ENCODE measurements at regions of chr3 and their contacts with region 1.

Region 1: DNA sequence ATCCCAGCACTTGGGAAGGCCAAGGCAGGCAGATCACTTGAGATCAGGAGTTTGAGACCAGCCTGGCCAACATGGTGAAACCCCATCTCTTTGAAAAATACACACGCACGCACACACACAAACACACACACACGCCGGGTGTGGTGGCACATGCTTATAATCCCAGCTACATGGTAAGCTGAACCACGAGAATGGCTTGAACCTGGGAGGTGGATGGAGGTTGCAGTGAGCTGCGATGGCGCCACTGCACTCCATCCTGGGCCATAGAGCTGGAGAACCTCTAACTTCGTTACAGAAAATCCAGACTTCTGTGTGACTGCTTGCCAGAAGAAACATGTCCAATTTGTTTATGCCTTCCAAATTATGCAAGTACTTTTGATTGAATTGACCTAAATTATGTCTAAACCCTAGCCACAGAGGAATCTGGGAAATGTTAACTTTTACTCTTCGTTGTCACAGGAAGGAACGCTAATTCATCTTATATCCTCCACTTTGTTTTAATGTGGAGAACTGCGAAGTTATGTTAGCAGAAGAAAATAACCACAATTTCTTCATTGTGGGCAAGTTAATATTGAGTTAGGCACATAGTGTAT is 21.7 kb downstream of the TRIM59 start:
- DNase-seq: no peak
- ATAC-seq: peak; percentile 13; the same call in 2 of the 3 replicates
- H3K4me3 ChIP-seq: no peak overlapping the region
- H3K27ac ChIP-seq: no peak overlapping the region
- H3K4me1 ChIP-seq: no peaks in the 10 kb centered on the region
- H3K27me3 ChIP-seq: no peaks in the 10 kb centered on the region
- CTCF ChIP-seq: no peak
- EP300 ChIP-seq: no peak
- POLR2A ChIP-seq: no peak
- RAD21 ChIP-seq: no peak

Region 2: DNA sequence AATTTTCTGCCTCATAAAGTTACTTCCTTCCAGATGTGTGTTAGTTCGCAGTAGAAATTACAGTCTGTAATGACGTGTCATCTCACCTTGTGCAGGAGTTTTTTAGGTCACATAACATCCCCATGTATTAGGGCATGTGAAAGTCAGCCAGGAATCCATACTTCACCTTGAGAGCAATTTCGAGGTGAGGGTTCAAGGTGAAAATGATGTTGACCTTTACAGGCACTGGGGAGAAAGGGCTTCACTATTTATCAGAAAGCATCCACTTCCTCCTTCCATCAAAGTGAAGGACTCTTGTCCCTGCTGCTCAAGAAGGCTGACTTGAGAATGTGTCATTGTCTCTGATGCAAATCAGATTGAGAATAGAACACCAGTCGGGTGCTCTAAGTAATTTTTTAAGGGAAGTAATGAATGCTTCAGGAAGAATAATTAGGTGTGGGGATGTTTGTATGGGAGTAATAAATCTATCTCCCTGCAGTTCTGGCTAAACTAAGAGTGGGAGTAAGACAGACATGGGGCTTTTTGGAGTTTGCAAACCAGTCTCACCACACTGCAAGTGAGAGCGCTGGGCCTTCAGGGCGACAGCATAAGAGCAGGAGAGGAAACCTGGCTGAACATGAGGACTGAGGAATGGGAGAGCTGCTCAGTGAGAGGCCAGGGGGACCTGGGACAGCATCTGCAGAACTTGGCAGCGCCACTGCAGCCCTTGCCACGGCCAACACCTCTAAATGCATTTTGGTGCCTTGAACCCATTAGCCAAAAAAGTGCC is 525.2 kb before region 1 on chr3:
- CTCF ChIA-PET with region 1: no interaction called
- POLR2A ChIA-PET with region 1: no interaction called
- RAD21 ChIA-PET with region 1: no interaction called
- SMC1A ChIA-PET with region 1: no interaction called
- in situ Hi-C with region 1: no loop called
- intact Hi-C with region 1: no loop called
- DNase-seq: no peak
- ATAC-seq: peak; percentile 78
- H3K4me3 ChIP-seq: no peak overlapping the region
- H3K27ac ChIP-seq: peak overlapping the region; percentile 52
- H3K4me1 ChIP-seq: peaks cover 28% of the 10 kb centered on the region
- H3K27me3 ChIP-seq: no peaks in the 10 kb centered on the region
- CTCF ChIP-seq: no peak
- EP300 ChIP-seq: no peak
- POLR2A ChIP-seq: no peak
- RAD21 ChIP-seq: no peak

Region 3: GRCh38 chr3:160084998-160085397 is 342.9 kb before region 1 on chr3:
- CTCF ChIA-PET with region 1: no interaction called
- POLR2A ChIA-PET with region 1: no interaction called
- RAD21 ChIA-PET with region 1: no interaction called
- SMC1A ChIA-PET with region 1: no interaction called
- in situ Hi-C with region 1: no loop called
- intact Hi-C with region 1: no loop called
- DNase-seq: no peak
- ATAC-seq: no peak
- H3K4me3 ChIP-seq: no peak overlapping the region
- H3K27ac ChIP-seq: no peak overlapping the region
- H3K4me1 ChIP-seq: no peaks in the 10 kb centered on the region
- H3K27me3 ChIP-seq: no peaks in the 10 kb centered on the region
- CTCF ChIP-seq: no peak
- EP300 ChIP-seq: no peak
- POLR2A ChIP-seq: no peak
- RAD21 ChIP-seq: no peak

Region 4: DNA sequence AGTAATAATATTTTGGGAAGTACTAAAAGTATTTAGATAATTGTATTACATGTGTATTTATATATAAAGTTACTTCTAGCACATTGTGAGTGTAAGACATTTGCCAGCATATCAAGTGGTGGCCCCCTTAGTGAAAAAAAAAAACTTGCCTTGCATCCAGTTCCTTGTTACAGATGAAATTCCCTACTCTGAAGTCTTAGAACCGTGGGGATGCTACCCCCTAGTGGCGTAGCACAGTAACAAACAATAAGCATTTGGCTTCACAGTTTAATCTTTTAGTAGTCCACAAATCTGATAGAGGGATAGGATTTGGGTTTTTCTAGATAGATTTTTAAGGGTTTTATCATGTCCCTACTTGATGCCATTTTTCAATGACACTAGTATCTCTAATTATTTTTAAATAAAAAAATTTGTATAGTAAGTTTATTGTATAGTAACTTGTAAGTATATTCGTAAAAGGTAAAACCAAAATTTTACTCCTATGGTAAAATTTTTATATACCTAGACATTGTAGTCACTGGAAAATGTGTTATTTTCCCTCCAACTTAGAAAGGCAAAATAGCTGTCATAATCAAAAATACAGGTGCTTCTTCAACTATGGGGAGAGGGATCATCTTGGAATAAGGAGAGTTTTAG is 14.2 kb before region 1 on chr3:
- CTCF ChIA-PET with region 1: interaction called, 13 read pairs
- POLR2A ChIA-PET with region 1: interaction called, 4 read pairs
- RAD21 ChIA-PET with region 1: interaction called, 6 read pairs
- SMC1A ChIA-PET with region 1: interaction called, 6 read pairs
- in situ Hi-C with region 1: no loop called
- intact Hi-C with region 1: no loop called
- DNase-seq: peak; percentile 19
- ATAC-seq: peak; percentile 72
- H3K4me3 ChIP-seq: no peak overlapping the region
- H3K27ac ChIP-seq: no peak overlapping the region
- H3K4me1 ChIP-seq: no peaks in the 10 kb centered on the region
- H3K27me3 ChIP-seq: no peaks in the 10 kb centered on the region
- CTCF ChIP-seq: peak; percentile 77 to 83 (median 82)
- EP300 ChIP-seq: no peak
- POLR2A ChIP-seq: no peak
- RAD21 ChIP-seq: peak; percentile 93

Region 5: DNA sequence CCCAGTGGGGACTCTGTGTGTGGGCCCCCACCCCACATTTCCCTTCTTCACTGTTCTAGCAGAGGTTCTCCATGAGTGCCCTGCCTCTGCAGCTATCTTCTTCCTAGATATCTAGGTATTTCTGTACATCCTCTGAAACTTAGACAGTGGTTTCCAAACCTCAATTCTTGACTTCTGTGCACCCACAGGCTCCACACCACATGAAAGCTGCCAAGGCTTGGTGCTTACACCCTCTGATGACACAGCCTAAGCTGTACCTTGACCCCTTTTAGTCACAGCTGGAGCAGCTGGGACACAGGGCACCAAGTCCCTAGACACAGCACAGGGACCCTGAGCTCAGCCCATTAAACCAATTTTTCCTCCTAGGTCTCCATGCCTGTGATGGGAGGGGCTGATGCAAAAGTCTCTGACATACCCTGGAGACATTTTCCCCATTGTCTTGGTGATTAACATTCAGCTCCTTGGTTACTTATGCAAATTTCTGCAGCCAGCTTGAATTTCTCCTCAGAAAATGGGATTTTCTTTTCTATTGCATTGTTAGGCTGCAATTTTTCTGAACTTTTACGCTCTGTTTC is 1373.1 kb after region 1 on chr3:
- CTCF ChIA-PET with region 1: no interaction called
- POLR2A ChIA-PET with region 1: no interaction called
- RAD21 ChIA-PET with region 1: no interaction called
- SMC1A ChIA-PET with region 1: no interaction called
- in situ Hi-C with region 1: no loop called
- intact Hi-C with region 1: no loop called
- DNase-seq: peak; percentile 8
- ATAC-seq: peak; percentile 77
- H3K4me3 ChIP-seq: no peak overlapping the region
- H3K27ac ChIP-seq: no peak overlapping the region
- H3K4me1 ChIP-seq: no peaks in the 10 kb centered on the region
- H3K27me3 ChIP-seq: no peaks in the 10 kb centered on the region
- CTCF ChIP-seq: no peak
- EP300 ChIP-seq: no peak
- POLR2A ChIP-seq: no peak
- RAD21 ChIP-seq: no peak

Measured in GM12878 (cell line).